HepG2 (cell line): ENCODE measurements at regions of chr16 and their contacts with region 1.

Region 1: GRCh38 chr16:46830902-46831647 is at the start of gene C16orf87:
- DNase-seq: peak; percentile 89
- ATAC-seq: peak; percentile 96
- H3K4me3 ChIP-seq: peak within 1 kb of the TSS; percentile 85 to 97 (median 87)
- H3K27ac ChIP-seq: peak within 1 kb of the TSS; percentile 85
- H3K4me1 ChIP-seq: peaks cover 55% of the 10 kb centered on the region
- H3K27me3 ChIP-seq: no peaks in the 10 kb centered on the region
- CTCF ChIP-seq: no peak
- EP300 ChIP-seq: 0 out of 4 replicates have a peak, but pooled peaks of 1 of the 2 experiments have one; percentile 17
- POLR2A ChIP-seq: peak; percentile 60 to 76
- RAD21 ChIP-seq: no peak
- total RNA-seq, gene C16orf87: 19.5 and 27.6 TPM in 2 replicates

Region 2: DNA sequence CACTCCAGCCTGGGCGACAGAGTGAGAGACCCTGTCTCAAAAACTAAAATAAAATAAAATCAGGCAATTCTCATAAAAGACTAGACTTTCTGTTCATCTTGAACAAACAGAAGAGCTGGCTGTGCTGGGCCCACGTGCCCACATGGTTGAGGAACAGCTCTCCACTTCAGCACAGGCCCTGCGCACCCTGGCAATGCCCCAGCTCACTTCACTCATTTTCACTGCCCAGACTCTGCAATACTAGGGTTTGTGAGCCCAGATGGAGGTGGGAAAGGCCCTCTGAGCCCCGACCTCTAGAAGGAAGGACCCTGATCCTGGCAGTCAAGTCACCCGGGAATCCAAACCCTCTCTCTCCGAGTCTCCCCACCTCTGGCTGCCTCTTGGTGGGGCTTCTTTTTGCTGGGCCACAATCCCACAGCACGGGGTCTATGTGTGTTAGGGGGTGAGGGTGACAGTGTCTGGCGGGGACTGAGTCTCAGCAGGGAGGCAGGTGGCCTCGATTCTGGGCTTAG is 97.7 kb before region 1 on chr16:
- CTCF ChIA-PET with region 1: no interaction called
- POLR2A ChIA-PET with region 1: no interaction called
- in situ Hi-C with region 1: no loop called
- intact Hi-C with region 1: loop called (anchors 1 kb)
- DNase-seq: no peak
- ATAC-seq: no peak
- H3K4me3 ChIP-seq: no peak overlapping the region
- H3K27ac ChIP-seq: no peak overlapping the region
- H3K4me1 ChIP-seq: no peaks in the 10 kb centered on the region
- H3K27me3 ChIP-seq: peaks cover 6 to 49% of the 10 kb centered on the region in 2 experiments; a peak in 3 of 5 replicates
- CTCF ChIP-seq: no peak
- EP300 ChIP-seq: no peak
- POLR2A ChIP-seq: no peak
- RAD21 ChIP-seq: no peak